ENCODE measurements at regions of chr9 and their contacts with region 1.

Region 1: GRCh38 chr9:73543727-73544126 is 392.1 kb downstream of the ANXA1 start:
- DNase-seq: no peak
- ATAC-seq: no peak
- H3K4me3 Mint-ChIP-seq: no peak overlapping the region
- H3K27ac Mint-ChIP-seq: no peak overlapping the region
- H3K4me1 Mint-ChIP-seq: no peaks in the 10 kb centered on the region
- H3K27me3 Mint-ChIP-seq: no peaks in the 10 kb centered on the region
- CTCF ChIP-seq: no peak

Region 2: DNA sequence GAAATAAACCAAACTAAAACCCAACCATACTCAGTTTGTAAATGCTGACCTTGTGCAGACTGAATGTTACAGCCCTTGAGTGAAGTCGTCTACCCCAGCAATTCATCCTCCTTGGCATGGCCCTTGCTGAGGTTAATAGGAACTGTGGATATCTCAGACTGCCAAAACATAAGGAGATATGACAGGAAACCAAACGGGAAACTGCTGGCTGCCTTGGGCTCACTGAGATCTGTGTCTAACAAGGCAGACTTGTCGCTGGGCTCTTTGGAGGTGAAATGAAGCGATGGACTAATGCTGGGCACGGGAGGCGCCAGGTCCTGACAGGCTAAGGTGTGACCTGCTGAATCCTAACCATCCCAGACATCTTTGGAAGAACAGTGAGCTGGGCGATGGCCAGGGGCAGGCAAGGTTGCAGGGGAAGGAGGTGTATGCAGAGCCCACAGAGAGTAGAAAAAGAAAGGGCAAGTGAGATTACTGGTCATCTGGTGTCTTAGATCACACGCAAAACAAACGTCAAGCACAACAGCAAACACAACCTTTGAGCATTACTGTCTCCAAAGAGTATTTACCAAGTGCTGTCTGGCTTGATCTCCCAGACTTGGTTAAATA is 546.2 kb before region 1 on chr9:
- CTCF ChIA-PET with region 1: no interaction called
- POLR2A ChIA-PET with region 1: no interaction called
- intact Hi-C with region 1: no loop called
- DNase-seq: no peak
- ATAC-seq: no peak
- H3K4me3 Mint-ChIP-seq: no peak overlapping the region
- H3K27ac Mint-ChIP-seq: no peak overlapping the region
- H3K4me1 Mint-ChIP-seq: peaks cover 2% of the 10 kb centered on the region
- H3K27me3 Mint-ChIP-seq: peaks cover 2% of the 10 kb centered on the region
- CTCF ChIP-seq: no peak

Region 3: GRCh38 chr9:73095425-73095824 is 448.3 kb before region 1 on chr9:
- CTCF ChIA-PET with region 1: no interaction called
- POLR2A ChIA-PET with region 1: no interaction called
- intact Hi-C with region 1: no loop called
- DNase-seq: no peak
- ATAC-seq: no peak
- H3K4me3 Mint-ChIP-seq: no peak overlapping the region
- H3K27ac Mint-ChIP-seq: no peak overlapping the region
- H3K4me1 Mint-ChIP-seq: peaks cover 3% of the 10 kb centered on the region
- H3K27me3 Mint-ChIP-seq: no peaks in the 10 kb centered on the region
- CTCF ChIP-seq: no peak

Region 4: DNA sequence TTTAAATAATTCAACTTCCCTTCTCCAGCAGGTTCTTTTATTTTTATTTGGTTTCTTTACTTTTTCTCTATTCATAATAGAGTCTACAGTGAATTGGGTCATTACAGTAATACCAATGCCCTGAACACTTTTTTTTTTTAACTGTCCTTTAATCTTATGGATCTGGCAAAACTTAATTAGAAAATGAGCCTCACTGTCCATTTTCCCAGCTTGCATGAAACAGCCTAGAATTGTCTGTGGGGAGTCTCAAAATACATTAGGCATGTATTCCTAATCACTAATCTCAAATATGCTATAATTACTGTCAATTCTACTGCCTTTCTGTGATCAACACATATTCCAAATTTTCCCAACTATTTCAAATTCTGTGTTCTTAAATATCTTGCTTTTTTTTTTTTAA is 14.7 kb after region 1 on chr9:
- CTCF ChIA-PET with region 1: no interaction called
- POLR2A ChIA-PET with region 1: no interaction called
- intact Hi-C with region 1: loop called (anchors 2 kb)
- DNase-seq: no peak
- ATAC-seq: no peak
- H3K4me3 Mint-ChIP-seq: no peak overlapping the region
- H3K27ac Mint-ChIP-seq: no peak overlapping the region
- H3K4me1 Mint-ChIP-seq: no peaks in the 10 kb centered on the region
- H3K27me3 Mint-ChIP-seq: no peaks in the 10 kb centered on the region
- CTCF ChIP-seq: no peak

Region 5: DNA sequence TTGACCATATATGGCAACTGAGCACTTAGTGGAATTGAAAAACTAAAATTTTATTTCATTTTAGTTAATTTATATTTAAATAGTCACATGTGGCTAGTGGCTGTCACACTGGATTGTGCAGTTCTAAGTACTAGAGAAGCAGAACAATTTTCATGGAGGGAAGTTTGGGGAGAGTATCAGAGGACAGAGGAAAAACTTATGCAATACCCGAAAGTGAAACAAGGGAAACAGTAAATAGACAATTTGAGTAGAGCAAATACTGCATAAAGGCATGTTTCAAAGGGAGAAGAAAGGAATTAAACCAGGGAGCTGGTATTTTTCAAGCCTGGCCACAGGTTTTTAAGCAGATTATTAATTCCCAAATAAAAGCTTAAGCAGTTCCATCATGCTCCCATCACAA is 362.9 kb after region 1 on chr9:
- CTCF ChIA-PET with region 1: no interaction called
- POLR2A ChIA-PET with region 1: no interaction called
- intact Hi-C with region 1: no loop called
- DNase-seq: no peak
- ATAC-seq: no peak
- H3K4me3 Mint-ChIP-seq: no peak overlapping the region
- H3K27ac Mint-ChIP-seq: no peak overlapping the region
- H3K4me1 Mint-ChIP-seq: no peaks in the 10 kb centered on the region
- H3K27me3 Mint-ChIP-seq: no peaks in the 10 kb centered on the region
- CTCF ChIP-seq: no peak